Activated T-helper 2 cell treated with anti-CD3 and anti-CD28 coated beads, Interferon-gamma antibody, Interleukin-2, Interleukin-4, amounts not matched to agents 10 μg/mL and 5 μg/mL and 100 μg/mL, durations not matched to agents 14 hours and 24 hours and 36 hours (primary cell): ENCODE measurements at regions of chr12 and their contacts with region 1.

Region 1: DNA sequence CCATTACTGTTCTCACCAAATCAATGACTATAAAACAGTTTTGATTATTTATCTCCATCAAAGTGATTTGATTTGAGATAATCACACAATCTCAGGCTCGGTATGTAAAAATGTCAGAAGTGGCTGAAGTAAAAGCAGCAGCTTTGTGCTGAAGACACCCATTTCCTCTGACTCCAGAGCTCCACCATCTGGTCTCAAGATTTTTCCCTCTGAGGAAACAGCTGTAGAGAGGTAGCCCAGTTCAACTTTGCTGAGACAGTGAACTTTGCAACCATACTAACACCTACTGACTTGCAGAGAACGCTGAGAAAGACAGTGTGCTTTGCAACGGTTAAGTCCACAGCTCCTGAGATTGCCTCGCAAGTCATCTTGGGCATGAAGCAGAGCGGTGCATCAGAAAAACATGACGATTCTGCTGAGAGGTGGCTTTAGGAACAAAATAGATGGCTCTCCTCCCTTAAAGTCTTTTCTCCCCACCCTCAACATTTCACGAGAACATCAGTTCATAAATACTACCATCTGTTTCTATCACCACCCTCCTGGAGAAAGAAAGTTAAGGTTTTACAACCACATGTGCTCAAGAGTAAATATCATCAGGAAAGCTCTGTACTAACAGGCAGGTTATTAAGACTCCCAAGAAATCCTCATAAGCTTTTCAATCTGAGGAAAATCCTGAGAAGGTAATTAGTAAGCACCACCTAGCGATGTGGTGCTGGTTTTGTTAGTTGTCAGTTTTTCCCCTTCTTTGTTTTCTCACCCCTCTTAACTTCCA is 34.8 kb downstream of the HIGD1C start:
- DNase-seq: no peak
- H3K4me3 Mint-ChIP-seq: no peak overlapping the region
- H3K27ac Mint-ChIP-seq: peak overlapping the region; percentile 24
- H3K4me1 Mint-ChIP-seq: peaks cover 31% of the 10 kb centered on the region
- H3K27me3 Mint-ChIP-seq: no peaks in the 10 kb centered on the region

Region 2: DNA sequence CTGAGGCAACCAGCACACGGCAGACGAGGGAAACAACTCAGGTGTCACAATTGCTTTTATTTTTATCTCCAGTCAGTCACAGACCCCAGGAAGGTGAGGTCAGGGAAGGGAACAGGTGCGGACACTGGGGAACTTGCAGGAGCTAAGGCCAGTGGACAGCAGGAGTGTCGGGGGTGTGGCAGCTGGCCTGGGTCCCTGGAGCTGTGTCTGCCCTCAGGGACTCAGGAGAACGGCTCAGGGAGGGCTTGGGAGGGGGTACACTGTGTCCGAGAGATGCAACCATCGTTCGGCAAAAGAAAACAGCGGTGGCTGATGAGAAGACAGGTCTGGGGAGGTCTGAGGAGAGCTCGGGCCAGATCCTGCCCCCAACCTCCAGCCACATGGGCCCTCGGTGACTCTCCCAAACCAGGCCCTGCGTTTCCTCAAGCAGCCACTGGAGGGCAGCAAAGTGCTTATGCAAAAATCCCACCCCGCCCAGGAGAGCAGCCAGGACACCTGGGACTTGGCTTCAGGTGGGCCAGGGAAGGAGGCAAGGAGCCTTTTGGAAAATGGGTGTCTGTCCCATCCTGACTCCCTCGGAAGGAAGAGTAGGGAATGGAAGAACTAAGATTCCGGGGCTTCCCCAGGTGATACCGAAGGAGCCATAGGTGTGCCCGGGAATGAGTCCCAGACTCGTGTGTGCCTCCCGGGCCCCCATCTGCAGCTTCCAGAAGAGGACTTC is 1120.1 kb before region 1 on chr12:
- intact Hi-C with region 1: no loop called
- DNase-seq: peak; percentile 59
- H3K4me3 Mint-ChIP-seq: no peak overlapping the region
- H3K27ac Mint-ChIP-seq: no peak overlapping the region
- H3K4me1 Mint-ChIP-seq: no peaks in the 10 kb centered on the region
- H3K27me3 Mint-ChIP-seq: no peaks in the 10 kb centered on the region

Region 3: GRCh38 chr12:50676761-50677160 is 310.4 kb before region 1 on chr12:
- intact Hi-C with region 1: no loop called
- DNase-seq: no peak
- H3K4me3 Mint-ChIP-seq: no peak overlapping the region
- H3K27ac Mint-ChIP-seq: no peak overlapping the region
- H3K4me1 Mint-ChIP-seq: no peaks in the 10 kb centered on the region
- H3K27me3 Mint-ChIP-seq: no peaks in the 10 kb centered on the region

Region 4: DNA sequence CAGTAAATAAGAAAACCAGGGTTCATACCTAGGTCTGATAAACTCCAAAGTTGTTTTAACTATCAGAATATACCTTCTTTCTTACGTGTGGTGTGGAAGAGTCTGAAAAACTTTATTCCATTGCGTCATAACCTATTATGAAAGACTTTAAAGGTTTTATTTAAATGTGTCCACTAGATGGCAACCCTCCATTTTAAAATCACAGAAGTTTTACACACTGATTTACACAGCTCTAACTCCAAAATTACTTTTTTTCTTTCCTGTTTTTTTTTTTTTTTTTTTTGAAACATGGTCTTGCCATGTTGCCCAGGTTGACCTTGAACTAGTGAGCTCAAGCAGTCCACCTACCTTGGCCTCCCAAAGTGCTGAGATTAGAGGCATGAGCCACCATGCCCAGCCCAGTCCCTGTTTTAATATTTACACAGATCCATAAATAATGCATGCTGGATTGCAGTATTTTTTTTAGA is 161.7 kb before region 1 on chr12:
- intact Hi-C with region 1: loop called (anchors 2 kb)
- DNase-seq: no peak
- H3K4me3 Mint-ChIP-seq: no peak overlapping the region
- H3K27ac Mint-ChIP-seq: no peak overlapping the region
- H3K4me1 Mint-ChIP-seq: peaks cover 6% of the 10 kb centered on the region
- H3K27me3 Mint-ChIP-seq: no peaks in the 10 kb centered on the region